HCT116 (cell line): ENCODE measurements at regions of chr5 and their contacts with region 1.

Region 1: DNA sequence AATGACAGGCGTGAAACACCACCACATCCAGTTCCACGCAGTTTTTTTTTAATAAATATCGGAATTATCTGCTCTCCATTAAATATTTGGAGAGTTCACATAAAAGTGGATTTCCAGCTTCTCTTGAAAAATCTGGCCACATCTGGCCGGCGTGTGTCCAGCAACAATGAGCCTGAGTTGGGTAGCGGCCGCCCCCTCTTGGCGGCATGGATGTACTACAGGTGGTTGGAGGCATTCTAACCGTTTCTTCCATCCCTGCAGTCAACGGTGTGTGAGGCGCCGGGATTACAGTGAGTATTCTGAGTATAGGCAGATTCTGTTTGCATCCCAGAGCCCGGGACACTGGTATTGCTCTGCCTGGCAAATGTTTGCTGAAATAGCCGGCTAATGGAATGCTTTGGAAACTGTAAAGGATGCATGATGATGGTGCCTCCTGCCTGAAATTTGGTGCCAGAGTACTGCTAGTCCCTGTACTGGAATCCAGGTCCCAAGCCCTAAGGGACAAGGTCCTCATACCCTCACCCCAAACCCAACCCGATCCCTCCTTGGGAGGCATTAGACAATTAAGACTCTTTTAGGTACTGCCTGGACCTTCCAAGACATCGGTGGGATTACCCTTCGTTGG is 13.6 kb upstream of the GM2A start:
- DNase-seq: peak; percentile 34
- ATAC-seq: peak; percentile 95
- H3K4me3 ChIP-seq: no peak overlapping the region
- H3K27ac ChIP-seq: no peak overlapping the region
- H3K4me1 ChIP-seq: peaks cover 8 to 9% of the 10 kb centered on the region in 2 experiments; a peak in 2 of 4 replicates
- H3K27me3 ChIP-seq: no peaks in the 10 kb centered on the region
- CTCF ChIP-seq: peak; percentile 83 to 93 (median 90)
- POLR2A ChIP-seq: no peak
- RAD21 ChIP-seq: peak; percentile 91

Region 2: DNA sequence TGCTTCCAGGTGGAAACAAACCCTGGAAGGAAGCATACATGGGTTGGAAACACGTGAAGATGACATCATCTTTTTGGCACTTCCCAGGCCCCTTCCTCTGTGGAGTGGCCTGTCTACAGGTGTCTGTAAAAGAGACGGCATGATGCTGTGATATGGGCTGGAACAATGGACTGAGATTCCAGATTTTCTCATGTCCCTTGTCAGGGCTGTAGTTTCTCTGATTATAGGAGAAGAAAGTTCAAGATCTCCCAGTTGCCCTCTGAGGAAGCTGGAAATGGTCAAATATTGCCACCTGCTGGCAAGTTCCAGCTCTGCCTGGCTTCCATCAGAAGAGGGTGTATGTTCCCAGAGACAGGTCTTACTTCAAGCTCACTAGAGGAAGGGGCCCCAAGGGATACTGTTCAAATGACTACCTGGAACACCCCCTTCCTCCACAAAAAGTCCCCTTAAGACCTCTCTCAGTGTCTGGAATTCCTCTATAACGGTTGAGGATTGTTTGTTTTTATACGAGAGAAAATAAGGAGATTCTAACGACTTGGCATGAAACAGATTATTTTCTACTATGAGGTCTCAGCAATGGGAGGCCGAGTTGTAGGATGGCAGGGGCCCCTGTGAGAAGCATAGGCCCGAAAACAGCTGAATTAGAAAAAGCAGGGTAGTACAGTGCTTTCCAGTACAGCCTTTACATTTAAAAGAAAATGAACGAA is 74.5 kb before region 1 on chr5:
- CTCF ChIA-PET with region 1: interaction called, 6 read pairs
- POLR2A ChIA-PET with region 1: no interaction called
- RAD21 ChIA-PET with region 1: interaction called, 3 read pairs
- intact Hi-C with region 1: loop called (anchors 2 kb)
- DNase-seq: peak; percentile 77
- ATAC-seq: peak; percentile 99
- H3K4me3 ChIP-seq: no peak overlapping the region
- H3K27ac ChIP-seq: no peak overlapping the region
- H3K4me1 ChIP-seq: peaks cover 0 to 8% of the 10 kb centered on the region in 2 experiments; a peak in 2 of 4 replicates
- H3K27me3 ChIP-seq: no peaks in the 10 kb centered on the region
- CTCF ChIP-seq: peak; percentile 91 to 95 (median 91)
- POLR2A ChIP-seq: no peak
- RAD21 ChIP-seq: peak; percentile 98

Region 3: GRCh38 chr5:151223469-151224264 is 15.7 kb before region 1 on chr5 and contains the start of gene CCDC69:
- CTCF ChIA-PET with region 1: interaction called, 10 read pairs
- POLR2A ChIA-PET with region 1: interaction called, 4 read pairs
- RAD21 ChIA-PET with region 1: no interaction called
- intact Hi-C with region 1: no loop called
- DNase-seq: peak; percentile 53
- ATAC-seq: peak; percentile 91
- H3K4me3 ChIP-seq: peak within 1 kb of the TSS; percentile 62 to 64
- H3K27ac ChIP-seq: peak within 1 kb of the TSS; percentile 9; the same call in 1 of the 2 replicates
- H3K4me1 ChIP-seq: peaks cover 8 to 23% of the 10 kb centered on the region in 2 experiments; a peak in 3 of 4 replicates
- H3K27me3 ChIP-seq: no peaks in the 10 kb centered on the region
- CTCF ChIP-seq: peak in 2 of 3 experiments; percentile 14 to 27; a peak in 2 of 6 replicates
- POLR2A ChIP-seq: no peak
- RAD21 ChIP-seq: no peak
- total RNA-seq, gene CCDC69: 4.3 TPM

Region 4: DNA sequence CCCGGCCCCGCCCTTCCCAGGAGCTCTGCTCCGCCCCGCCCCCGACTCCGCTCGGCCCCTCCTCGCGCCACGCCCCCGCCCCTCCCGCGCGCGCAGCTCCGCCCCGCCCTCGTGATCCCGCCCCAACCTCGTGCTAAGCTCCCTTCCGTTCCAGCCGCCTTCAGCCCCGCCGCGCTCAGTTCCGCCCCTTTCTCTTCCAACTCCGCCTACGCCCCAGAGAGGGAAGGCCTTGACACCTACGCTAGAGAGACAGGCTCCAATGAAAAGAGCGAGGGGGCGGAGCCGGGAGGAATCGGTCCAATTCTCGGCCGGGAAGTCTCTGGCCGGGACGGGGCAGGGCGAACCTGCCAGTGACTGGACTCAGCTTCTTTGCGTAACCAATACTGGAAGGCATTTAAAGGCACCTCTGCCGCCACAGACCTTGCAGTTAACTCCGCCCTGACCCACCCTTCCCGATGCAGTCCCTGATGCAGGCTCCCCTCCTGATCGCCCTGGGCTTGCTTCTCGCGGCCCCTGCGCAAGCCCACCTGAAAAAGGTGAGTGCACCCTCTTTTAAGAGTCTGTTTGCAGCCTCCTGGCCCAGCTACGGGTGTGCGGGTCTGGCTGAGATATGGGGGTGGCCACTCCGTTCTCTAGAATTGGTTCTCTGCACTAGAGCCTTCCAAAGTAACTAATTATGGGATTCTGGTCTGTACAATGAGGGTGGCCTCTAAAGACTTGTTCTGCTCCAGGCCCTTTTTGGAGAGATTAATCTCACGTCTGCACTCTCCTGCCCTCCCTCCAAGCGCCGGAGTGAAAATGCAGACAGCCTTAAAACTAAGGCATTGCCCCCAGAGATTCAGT is 13.6 kb after region 1 on chr5 and contains the start of gene GM2A:
- CTCF ChIA-PET with region 1: interaction called, 11 read pairs
- POLR2A ChIA-PET with region 1: interaction called, 8 read pairs
- RAD21 ChIA-PET with region 1: interaction called in 1 of 2 experiments, 3 read pairs
- intact Hi-C with region 1: no loop called
- DNase-seq: peak; percentile 99
- ATAC-seq: peak; percentile 98
- H3K4me3 ChIP-seq: peak within 1 kb of the TSS; percentile 70 to 83
- H3K27ac ChIP-seq: no peak within 1 kb of the TSS; the same call in 1 of the 2 replicates
- H3K4me1 ChIP-seq: peaks cover 3 to 34% of the 10 kb centered on the region in 2 experiments; a peak in 3 of 4 replicates
- H3K27me3 ChIP-seq: no peaks in the 10 kb centered on the region
- CTCF ChIP-seq: no peak
- POLR2A ChIP-seq: peak; percentile 39
- RAD21 ChIP-seq: no peak
- total RNA-seq, gene GM2A: 25.0 TPM

Region 5: DNA sequence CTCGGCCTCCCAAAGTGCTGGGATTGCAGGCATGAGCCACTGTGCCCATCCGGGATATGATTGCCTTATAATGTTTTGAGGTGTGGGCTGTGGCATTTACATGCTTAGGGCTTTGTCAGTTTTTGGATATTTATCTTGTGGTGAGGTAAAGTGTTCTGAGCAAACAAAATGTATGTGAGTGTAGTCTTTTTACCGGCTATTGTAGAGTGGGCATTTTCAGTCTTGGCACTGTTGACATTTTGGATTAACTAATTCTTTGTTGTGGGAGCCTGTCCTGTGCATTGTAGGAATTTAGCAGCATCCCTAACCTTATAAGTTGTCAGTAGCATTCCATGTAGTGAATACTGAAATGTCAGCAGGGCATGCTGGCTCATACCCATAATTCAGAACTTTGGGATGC is 554.0 kb after region 1 on chr5:
- CTCF ChIA-PET with region 1: no interaction called
- POLR2A ChIA-PET with region 1: no interaction called
- RAD21 ChIA-PET with region 1: no interaction called
- intact Hi-C with region 1: no loop called
- DNase-seq: no peak
- ATAC-seq: no peak
- H3K4me3 ChIP-seq: no peak overlapping the region
- H3K27ac ChIP-seq: no peak overlapping the region
- H3K4me1 ChIP-seq: 0 out of 4 replicates have a peak, but pooled peaks cover 0 to 3% of the 10 kb centered on the region in 2 experiments
- H3K27me3 ChIP-seq: no peaks in the 10 kb centered on the region
- CTCF ChIP-seq: no peak
- POLR2A ChIP-seq: no peak
- RAD21 ChIP-seq: no peak